Right ventricle myocardium inferior (tissue), 1 donor: ENCODE measurements at regions of chr6 and their contacts with region 1.

Region 1: GRCh38 chr6:166999145-166999883 is at the start of gene CEP43:
- DNase-seq: peak; percentile 98
- ATAC-seq: peak; percentile 99
- total RNA-seq, gene CEP43: 10.8 TPM

Region 2: GRCh38 chr6:166775180-166776081 is 223.9 kb before region 1 on chr6:
- intact Hi-C with region 1: loop called (anchors 5 kb)
- DNase-seq: no peak
- ATAC-seq: peak; percentile 56

Region 3: GRCh38 chr6:167141667-167142432 is 142.5 kb after region 1 on chr6:
- intact Hi-C with region 1: loop called (anchors 2 kb)
- DNase-seq: peak; percentile 75
- ATAC-seq: peak; percentile 74